Activated naive CD4-positive, alpha-beta T cell treated with anti-CD3 and anti-CD28 coated beads for 36 hours (primary cell): ENCODE measurements at regions of chr11 and their contacts with region 1.

Region 1: DNA sequence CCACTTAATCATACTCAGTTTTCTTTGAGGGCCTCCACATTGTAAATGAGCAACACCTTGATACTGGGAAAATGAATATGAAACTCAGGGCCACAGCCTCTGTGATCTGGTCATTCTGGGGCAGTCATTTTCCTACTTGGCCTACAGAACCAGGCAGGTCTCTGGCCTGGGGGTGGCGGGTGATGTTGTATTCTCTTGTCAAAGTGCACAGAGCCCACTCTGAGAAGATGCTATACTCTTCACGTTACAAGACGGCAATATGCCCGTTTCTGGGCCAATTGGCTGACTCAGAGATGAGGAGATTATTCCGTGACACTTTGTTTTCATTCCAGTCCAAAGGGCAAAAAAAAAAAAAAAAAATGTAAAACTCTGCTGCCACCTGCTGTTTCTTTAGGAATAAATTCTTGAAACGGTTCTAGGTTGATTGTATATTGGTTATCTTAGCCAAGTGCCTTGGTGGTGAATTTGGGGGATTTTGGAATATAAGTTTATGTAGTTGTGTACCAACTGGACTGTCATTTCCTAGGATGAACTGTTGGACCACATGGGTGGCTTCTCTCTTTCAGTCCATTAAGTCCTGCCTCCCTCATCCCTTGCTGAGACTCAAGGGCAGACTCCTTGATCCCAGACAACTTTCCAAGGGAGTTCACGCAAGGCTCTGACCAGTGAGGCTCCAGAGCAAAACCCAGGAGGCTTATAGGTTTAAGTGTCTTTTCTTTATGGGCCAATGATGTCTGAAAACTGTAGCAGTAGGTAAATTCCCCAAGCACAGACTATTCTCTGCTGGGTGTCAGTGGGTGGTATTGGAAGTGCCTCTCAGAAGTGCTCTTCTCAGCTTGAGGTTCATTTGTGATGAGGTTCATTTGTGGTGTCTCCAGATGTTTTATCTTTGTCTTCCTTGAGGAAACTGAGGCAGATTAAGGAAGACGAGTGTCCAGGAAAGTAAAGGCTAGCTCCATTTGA is 18.2 kb downstream of the ADM start:
- DNase-seq: peak; percentile 69
- H3K4me3 Mint-ChIP-seq: peak overlapping the region; percentile 38
- H3K27ac Mint-ChIP-seq: peak overlapping the region; percentile 69
- H3K4me1 Mint-ChIP-seq: peaks cover 12% of the 10 kb centered on the region
- H3K27me3 Mint-ChIP-seq: no peaks in the 10 kb centered on the region

Region 2: GRCh38 chr11:9861860-9862725 is 461.0 kb before region 1 on chr11:
- CTCF ChIA-PET with region 1: interaction called, 4 read pairs
- intact Hi-C with region 1: loop called (anchors 1 kb)
- DNase-seq: peak; percentile 71
- H3K4me3 Mint-ChIP-seq: no peak overlapping the region
- H3K27ac Mint-ChIP-seq: no peak overlapping the region
- H3K4me1 Mint-ChIP-seq: peaks cover 30% of the 10 kb centered on the region
- H3K27me3 Mint-ChIP-seq: no peaks in the 10 kb centered on the region

Region 3: GRCh38 chr11:9990221-9990975 is 332.7 kb before region 1 on chr11:
- CTCF ChIA-PET with region 1: no interaction called
- intact Hi-C with region 1: loop called (anchors 5 kb)
- DNase-seq: no peak
- H3K4me3 Mint-ChIP-seq: no peak overlapping the region
- H3K27ac Mint-ChIP-seq: no peak overlapping the region
- H3K4me1 Mint-ChIP-seq: peaks cover 3% of the 10 kb centered on the region
- H3K27me3 Mint-ChIP-seq: no peaks in the 10 kb centered on the region

Region 4: DNA sequence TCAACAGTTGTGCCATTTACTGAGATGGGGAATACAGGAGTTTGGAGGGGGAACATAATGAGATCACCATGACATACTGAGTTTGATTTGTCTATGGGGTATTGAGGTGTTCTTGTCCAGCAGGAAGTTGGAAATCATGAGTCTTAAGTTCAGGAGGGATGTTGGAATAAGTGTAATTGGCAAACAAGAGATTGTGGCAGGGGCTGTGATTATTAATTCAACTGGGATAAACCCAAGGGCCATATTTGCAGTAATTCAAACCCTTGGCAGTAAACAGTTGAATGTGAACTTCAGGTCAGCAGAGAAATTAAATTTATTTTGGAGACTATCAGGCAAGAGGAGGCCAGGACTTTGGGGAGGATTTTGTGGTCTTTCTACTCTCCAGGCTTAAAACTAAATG is 15.2 kb after region 1 on chr11:
- CTCF ChIA-PET with region 1: no interaction called
- intact Hi-C with region 1: no loop called
- DNase-seq: no peak
- H3K4me3 Mint-ChIP-seq: no peak overlapping the region
- H3K27ac Mint-ChIP-seq: no peak overlapping the region
- H3K4me1 Mint-ChIP-seq: no peaks in the 10 kb centered on the region
- H3K27me3 Mint-ChIP-seq: peaks cover 17% of the 10 kb centered on the region

Region 5: DNA sequence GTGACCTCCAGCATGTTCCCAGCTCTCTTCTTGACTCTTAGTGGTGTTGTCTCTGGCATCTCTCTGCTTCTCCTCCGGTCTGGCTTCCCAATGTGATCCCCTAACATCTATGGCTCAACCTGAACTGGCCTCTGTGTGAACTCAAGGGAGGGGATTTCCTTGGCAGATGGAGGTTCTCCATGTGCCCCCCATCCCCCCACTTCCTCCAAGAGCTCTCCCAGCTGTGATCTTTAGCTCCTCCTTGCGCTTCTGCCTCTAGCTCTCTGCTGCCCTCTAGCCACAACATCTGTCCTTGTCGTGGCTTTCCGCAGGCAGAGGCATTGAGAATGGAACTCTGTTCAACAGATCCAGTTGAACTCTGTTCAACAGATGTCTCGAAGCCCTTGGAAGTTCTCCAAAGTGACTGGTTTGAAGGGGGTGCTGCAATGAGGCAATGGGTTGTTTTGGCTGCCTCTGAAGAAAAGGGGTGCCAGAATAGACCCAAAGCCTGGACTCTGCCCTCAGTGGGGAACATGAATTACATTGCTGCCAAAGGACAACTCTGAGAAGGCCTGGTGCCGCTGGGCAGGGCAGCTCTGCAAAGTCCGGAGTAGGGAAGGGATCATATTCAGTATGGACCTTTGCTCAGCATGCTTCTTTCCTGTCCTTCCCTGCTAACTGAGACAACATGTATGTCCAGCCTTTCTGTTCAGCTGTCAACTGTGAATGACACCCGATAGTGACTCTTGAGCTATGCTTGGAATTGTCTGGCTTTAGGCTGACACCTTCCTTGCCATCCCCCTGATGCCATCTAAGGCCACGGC is 43.7 kb after region 1 on chr11:
- CTCF ChIA-PET with region 1: interaction called, 10 read pairs
- intact Hi-C with region 1: loop called (anchors 1 kb)
- DNase-seq: peak; percentile 87
- H3K4me3 Mint-ChIP-seq: peak overlapping the region; percentile 7
- H3K27ac Mint-ChIP-seq: no peak overlapping the region
- H3K4me1 Mint-ChIP-seq: peaks cover 6% of the 10 kb centered on the region
- H3K27me3 Mint-ChIP-seq: peaks cover 9% of the 10 kb centered on the region

Region 6: GRCh38 chr11:10622957-10623791 is 300.1 kb after region 1 on chr11:
- CTCF ChIA-PET with region 1: no interaction called
- intact Hi-C with region 1: no loop called
- DNase-seq: peak; percentile 21
- H3K4me3 Mint-ChIP-seq: no peak overlapping the region
- H3K27ac Mint-ChIP-seq: peak overlapping the region; percentile 25
- H3K4me1 Mint-ChIP-seq: peaks cover 17% of the 10 kb centered on the region
- H3K27me3 Mint-ChIP-seq: no peaks in the 10 kb centered on the region

Region 7: GRCh38 chr11:11135820-11136465 is 812.8 kb after region 1 on chr11:
- CTCF ChIA-PET with region 1: no interaction called
- intact Hi-C with region 1: no loop called
- DNase-seq: no peak
- H3K4me3 Mint-ChIP-seq: no peak overlapping the region
- H3K27ac Mint-ChIP-seq: no peak overlapping the region
- H3K4me1 Mint-ChIP-seq: peaks cover 18% of the 10 kb centered on the region
- H3K27me3 Mint-ChIP-seq: no peaks in the 10 kb centered on the region